ENCODE measurements at regions of chr17 and their contacts with region 1.

Region 1: DNA sequence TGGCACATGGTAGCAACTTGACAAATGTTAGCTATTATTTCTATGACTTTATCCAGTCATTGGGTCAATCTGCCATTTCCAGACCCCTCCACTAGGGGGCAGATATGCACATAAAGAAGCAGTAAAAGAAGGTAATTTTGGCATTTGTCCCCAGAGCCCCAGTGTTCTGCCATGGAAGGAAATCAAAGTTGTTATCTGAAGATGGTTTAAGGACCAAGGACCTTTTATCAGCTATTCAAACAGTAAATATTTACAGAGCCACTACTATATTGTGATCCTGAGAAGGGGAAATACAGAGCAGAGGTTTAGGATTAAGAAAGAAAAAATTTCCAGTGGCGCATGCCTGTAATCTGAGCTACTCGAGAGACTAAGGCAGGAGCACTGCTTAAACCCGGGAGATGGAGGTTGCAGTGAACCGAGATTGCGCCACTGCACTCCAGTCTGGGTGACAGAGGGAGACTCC is 20.0 kb downstream of the TRAF4 start:
- DNase-seq: peak; percentile 53
- ATAC-seq: peak; percentile 78
- H3K4me3 ChIP-seq: no peak overlapping the region
- H3K27ac ChIP-seq: no peak overlapping the region
- H3K4me1 ChIP-seq: peaks cover 0 to 13% of the 10 kb centered on the region in 2 experiments; a peak in 3 of 4 replicates
- H3K27me3 ChIP-seq: no peaks in the 10 kb centered on the region
- CTCF ChIP-seq: peak; percentile 79 to 95 (median 85)
- POLR2A ChIP-seq: no peak
- RAD21 ChIP-seq: peak; percentile 89

Region 2: GRCh38 chr17:27956601-27957445 is 807.0 kb before region 1 on chr17:
- CTCF ChIA-PET with region 1: no interaction called
- POLR2A ChIA-PET with region 1: no interaction called
- RAD21 ChIA-PET with region 1: no interaction called
- intact Hi-C with region 1: no loop called
- DNase-seq: no peak
- ATAC-seq: peak; percentile 60
- H3K4me3 ChIP-seq: no peak overlapping the region
- H3K27ac ChIP-seq: no peak overlapping the region
- H3K4me1 ChIP-seq: peaks cover 8 to 21% of the 10 kb centered on the region in 2 experiments
- H3K27me3 ChIP-seq: peaks cover 12% of the 10 kb centered on the region; the same call in 1 of the 2 replicates
- CTCF ChIP-seq: no peak
- POLR2A ChIP-seq: no peak
- RAD21 ChIP-seq: no peak

Region 3: DNA sequence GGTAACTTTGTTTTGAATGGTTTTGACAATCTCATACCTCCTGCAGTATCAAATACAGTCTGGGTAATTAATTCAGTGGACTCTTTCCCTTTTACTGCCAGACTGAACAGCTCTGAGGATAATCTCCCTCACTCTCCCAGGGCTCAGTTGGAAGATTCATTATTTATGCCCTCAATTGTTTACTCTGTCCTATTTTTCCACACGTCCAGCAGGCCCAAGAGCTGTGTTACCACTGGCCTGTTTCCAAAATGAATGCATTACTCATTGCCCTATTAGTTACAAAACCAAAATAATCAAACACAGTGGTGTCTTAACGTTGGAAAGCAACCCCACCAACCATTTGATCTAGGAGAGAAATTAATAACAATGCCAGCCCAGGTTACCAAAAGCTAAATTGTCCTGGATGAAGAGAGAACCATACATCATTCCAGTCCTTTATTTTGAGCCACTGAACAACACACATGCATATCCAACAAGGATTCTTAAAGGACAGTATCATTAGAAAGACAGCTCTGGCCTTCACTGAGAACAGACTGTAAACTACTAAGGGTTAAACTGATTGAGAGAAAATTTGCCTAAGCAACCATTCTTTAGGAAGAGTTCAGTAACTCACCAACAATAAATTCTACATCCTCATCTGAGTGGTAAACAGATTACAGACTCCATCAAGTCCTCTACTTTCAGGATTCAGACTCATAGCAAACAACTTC is 44.2 kb after region 1 on chr17:
- CTCF ChIA-PET with region 1: interaction called, 12 read pairs
- POLR2A ChIA-PET with region 1: interaction called, 4 read pairs
- RAD21 ChIA-PET with region 1: interaction called, 3 to 5 read pairs
- intact Hi-C with region 1: no loop called
- DNase-seq: peak; percentile 69
- ATAC-seq: peak; percentile 4; the same call in 1 of the 2 replicates
- H3K4me3 ChIP-seq: peak overlapping the region; percentile 27 to 36
- H3K27ac ChIP-seq: peak overlapping the region; percentile 95
- H3K4me1 ChIP-seq: peaks cover 52 to 58% of the 10 kb centered on the region in 2 experiments
- H3K27me3 ChIP-seq: no peaks in the 10 kb centered on the region
- CTCF ChIP-seq: no peak
- POLR2A ChIP-seq: no peak
- RAD21 ChIP-seq: 0 out of 2 replicates have a peak, but pooled peaks have one; percentile 4

Region 4: GRCh38 chr17:28878981-28879380 is 115.1 kb after region 1 on chr17:
- CTCF ChIA-PET with region 1: interaction called, 57 read pairs
- POLR2A ChIA-PET with region 1: no interaction called
- RAD21 ChIA-PET with region 1: interaction called, 10 read pairs
- intact Hi-C with region 1: loop called (anchors 1 kb)
- DNase-seq: peak; percentile 67
- ATAC-seq: peak; percentile 99
- H3K4me3 ChIP-seq: no peak overlapping the region
- H3K27ac ChIP-seq: no peak overlapping the region
- H3K4me1 ChIP-seq: no peaks in the 10 kb centered on the region; a peak in 1 of 4 replicates
- H3K27me3 ChIP-seq: no peaks in the 10 kb centered on the region
- CTCF ChIP-seq: peak; percentile 71 to 87 (median 76)
- POLR2A ChIP-seq: no peak
- RAD21 ChIP-seq: peak; percentile 92

Region 5: GRCh38 chr17:28916302-28916934 is 152.6 kb after region 1 on chr17:
- CTCF ChIA-PET with region 1: interaction called, 4 read pairs
- POLR2A ChIA-PET with region 1: no interaction called
- RAD21 ChIA-PET with region 1: no interaction called
- intact Hi-C with region 1: loop called (anchors 1 kb)
- DNase-seq: peak; percentile 13
- ATAC-seq: peak; percentile 88
- H3K4me3 ChIP-seq: no peak overlapping the region
- H3K27ac ChIP-seq: no peak overlapping the region
- H3K4me1 ChIP-seq: no peaks in the 10 kb centered on the region
- H3K27me3 ChIP-seq: no peaks in the 10 kb centered on the region
- CTCF ChIP-seq: peak; percentile 52 to 65 (median 62); a peak in 5 of 6 replicates
- POLR2A ChIP-seq: no peak
- RAD21 ChIP-seq: peak; percentile 72

Measured in HCT116 (cell line).